Endothelial cell of umbilical vein (primary cell): ENCODE measurements at regions of chr11 and their contacts with region 1.

Region 1: DNA sequence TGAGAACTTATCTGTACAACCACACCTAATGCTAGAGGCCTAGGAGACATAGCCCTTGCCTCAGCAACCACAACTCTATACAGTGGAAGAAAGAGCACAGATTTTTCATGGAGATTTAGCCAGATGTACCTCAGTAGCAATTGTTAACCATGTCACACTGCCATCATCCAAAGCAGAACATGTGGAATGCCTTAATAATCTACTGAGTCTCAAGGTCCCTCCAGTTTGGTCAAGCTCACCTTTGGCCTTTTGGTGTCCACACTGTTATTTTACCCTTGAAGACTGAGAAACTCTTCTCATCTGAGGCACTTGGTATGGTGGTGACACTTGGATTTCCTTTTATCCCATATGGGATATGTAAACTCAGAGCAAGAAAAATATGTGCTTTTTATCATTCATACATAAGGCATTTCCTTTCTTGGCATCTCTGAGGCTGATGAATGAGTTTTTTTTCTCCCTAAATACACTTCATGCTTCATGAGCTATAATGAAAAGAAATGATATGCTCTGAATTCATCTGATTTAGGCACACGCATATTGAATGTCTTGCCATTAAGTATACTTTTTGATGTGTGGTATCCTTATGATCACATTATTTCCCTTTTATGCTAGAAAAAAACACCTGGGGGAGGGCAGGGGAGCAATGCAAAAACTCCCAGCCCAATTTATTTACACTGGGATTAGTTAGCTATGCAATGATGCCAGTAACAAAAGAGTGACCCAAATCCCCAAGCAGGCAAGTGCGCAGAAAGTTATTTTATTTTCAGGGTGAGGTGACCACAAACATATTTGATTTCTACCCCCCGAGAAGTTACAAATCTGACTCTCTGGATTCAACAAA is 63.3 kb upstream of the ME3 start:
- DNase-seq: peak; percentile 78
- H3K4me3 ChIP-seq: no peak overlapping the region
- H3K27ac ChIP-seq: peak overlapping the region; percentile 93
- H3K4me1 ChIP-seq: peaks cover 55% of the 10 kb centered on the region
- H3K27me3 ChIP-seq: no peaks in the 10 kb centered on the region
- CTCF ChIP-seq: no peak
- POLR2A ChIP-seq: peak; percentile 39

Region 2: DNA sequence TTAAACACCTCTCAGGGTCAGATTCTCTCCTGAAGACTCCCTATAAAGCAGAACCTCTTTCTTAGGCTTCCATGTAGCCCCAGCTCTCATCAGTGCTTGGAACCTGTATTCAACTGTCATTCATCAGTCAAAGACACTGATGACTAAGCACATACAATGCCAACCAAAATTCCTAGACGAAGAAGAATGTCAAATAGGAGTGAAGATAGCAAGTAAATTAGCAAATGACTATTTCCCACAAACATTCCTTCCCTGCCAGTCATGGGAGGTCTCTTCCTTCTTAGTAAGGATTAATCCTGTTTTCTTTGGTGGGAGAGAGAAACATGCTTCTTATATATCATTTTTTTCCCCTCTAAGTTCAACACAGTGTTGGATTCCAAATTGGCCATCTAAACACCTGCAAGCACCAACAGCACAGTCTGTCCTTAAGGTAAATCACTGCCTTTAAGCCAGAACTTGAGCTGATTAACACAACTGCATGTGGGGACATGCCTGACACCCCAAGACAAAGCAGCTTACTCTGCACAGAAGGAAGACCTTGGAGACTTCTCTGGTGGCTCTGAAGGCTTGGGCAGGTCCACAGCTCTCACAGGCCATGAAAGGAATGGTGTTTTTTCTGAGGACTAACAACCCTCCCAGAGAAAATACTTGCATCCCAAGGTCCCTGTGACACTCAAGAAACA is 15.8 kb before region 1 on chr11:
- CTCF ChIA-PET with region 1: interaction called, 9 read pairs
- POLR2A ChIA-PET with region 1: interaction called, 12 read pairs
- dilution Hi-C with region 1: no loop called
- intact Hi-C with region 1: loop called (anchors 1 kb)
- DNase-seq: peak; percentile 87
- H3K4me3 ChIP-seq: no peak overlapping the region
- H3K27ac ChIP-seq: peak overlapping the region; percentile 87
- H3K4me1 ChIP-seq: peaks cover 31% of the 10 kb centered on the region
- H3K27me3 ChIP-seq: no peaks in the 10 kb centered on the region
- CTCF ChIP-seq: no peak
- POLR2A ChIP-seq: no peak

Region 3: DNA sequence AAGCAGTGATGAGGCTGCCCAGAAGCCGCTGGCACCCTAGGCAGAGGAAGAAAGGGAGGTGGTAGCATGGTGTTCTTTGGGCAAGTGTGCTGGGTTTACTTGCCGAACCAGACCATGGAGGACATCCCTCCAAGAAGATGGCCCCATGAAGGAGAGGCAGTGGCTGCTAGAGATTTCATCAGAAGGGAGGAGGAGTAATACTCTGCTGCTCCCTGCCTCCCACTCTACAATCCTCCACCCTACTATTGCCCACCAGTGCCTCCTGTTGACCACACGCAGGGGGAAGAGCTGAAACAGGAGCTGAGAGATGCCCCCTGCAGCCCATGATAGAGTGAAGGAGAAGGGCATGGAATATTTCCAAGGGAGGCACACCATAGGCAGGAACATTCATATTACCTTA is 13.7 kb after region 1 on chr11:
- CTCF ChIA-PET with region 1: no interaction called
- POLR2A ChIA-PET with region 1: no interaction called
- dilution Hi-C with region 1: no loop called
- intact Hi-C with region 1: no loop called
- DNase-seq: no peak
- H3K4me3 ChIP-seq: no peak overlapping the region
- H3K27ac ChIP-seq: no peak overlapping the region
- H3K4me1 ChIP-seq: no peaks in the 10 kb centered on the region
- H3K27me3 ChIP-seq: no peaks in the 10 kb centered on the region
- CTCF ChIP-seq: no peak
- POLR2A ChIP-seq: no peak

Region 4: GRCh38 chr11:86769219-86769618 is 33.5 kb after region 1 on chr11:
- CTCF ChIA-PET with region 1: no interaction called
- POLR2A ChIA-PET with region 1: no interaction called
- dilution Hi-C with region 1: no loop called
- intact Hi-C with region 1: no loop called
- DNase-seq: no peak
- H3K4me3 ChIP-seq: no peak overlapping the region
- H3K27ac ChIP-seq: no peak overlapping the region
- H3K4me1 ChIP-seq: no peaks in the 10 kb centered on the region
- H3K27me3 ChIP-seq: no peaks in the 10 kb centered on the region
- CTCF ChIP-seq: no peak
- POLR2A ChIP-seq: no peak